Psoas muscle (tissue), 8 donors: ENCODE measurements at regions of chr11 and their contacts with region 1.

Region 1: DNA sequence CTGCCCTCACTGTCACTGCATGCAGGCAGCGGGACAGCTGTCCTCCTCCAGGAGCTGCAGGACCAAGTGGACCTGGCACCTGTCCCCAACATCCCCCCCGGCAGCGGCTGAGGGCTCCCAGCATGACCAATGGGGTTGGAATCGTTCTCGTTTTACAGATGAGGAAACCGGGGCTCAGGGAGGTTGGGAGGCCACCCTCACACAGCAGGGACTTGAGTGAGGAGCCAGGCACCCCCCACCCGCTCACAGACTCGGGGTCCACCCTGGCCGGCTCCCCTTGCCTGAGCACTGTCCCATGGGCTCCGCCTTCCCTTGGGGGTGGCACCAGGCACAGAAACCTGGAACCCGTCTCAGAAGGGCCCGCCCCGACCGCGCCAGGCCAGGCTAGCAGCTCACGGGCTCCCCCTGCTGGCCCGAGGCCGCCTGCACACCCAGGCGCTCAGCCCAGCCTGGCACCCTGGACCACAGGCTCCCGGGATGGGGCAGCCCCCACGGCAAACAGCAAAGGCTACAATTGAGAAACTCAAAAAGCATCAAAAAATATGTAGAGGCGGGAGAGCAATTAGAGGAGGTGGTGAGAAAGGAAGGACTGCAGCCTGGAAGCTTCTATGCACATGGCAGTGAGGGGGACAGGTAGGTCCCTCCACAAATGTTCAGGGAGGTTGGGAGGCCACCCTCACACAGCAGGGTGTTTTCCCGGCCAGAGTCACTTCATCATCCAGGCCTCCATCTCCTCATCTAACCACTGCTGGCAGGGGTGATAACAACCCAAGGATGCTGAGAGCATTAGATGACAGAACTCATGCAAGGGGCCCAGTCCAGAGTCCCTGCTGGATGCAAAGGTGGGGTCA is 12.8 kb downstream of the MACROD1 start:
- DNase-seq: peak; percentile 66 to 81
- ATAC-seq: peak; percentile 50 to 70 (median 64)
- H3K4me3 ChIP-seq: peak overlapping the region; percentile 13
- H3K27ac ChIP-seq: no peak overlapping the region
- H3K4me1 ChIP-seq: peaks cover 76% of the 10 kb centered on the region
- H3K27me3 ChIP-seq: no peaks in the 10 kb centered on the region
- CTCF ChIP-seq: peak; percentile 99

Region 2: GRCh38 chr11:63838678-63839507 is 314.2 kb before region 1 on chr11 and contains the start of gene MARK2:
- intact Hi-C with region 1: loop called (anchors 5 to 10 kb)
- DNase-seq: peak; percentile 98 to 99
- ATAC-seq: peak; percentile 91 to 94 (median 93)
- H3K4me3 ChIP-seq: peak within 1 kb of the TSS; percentile 89
- H3K27ac ChIP-seq: peak within 1 kb of the TSS; percentile 92
- H3K4me1 ChIP-seq: peaks cover 45% of the 10 kb centered on the region
- H3K27me3 ChIP-seq: no peaks in the 10 kb centered on the region
- CTCF ChIP-seq: no peak
- total RNA-seq, gene MARK2: 21.7 to 24.9 (median 22.9) TPM

Region 3: DNA sequence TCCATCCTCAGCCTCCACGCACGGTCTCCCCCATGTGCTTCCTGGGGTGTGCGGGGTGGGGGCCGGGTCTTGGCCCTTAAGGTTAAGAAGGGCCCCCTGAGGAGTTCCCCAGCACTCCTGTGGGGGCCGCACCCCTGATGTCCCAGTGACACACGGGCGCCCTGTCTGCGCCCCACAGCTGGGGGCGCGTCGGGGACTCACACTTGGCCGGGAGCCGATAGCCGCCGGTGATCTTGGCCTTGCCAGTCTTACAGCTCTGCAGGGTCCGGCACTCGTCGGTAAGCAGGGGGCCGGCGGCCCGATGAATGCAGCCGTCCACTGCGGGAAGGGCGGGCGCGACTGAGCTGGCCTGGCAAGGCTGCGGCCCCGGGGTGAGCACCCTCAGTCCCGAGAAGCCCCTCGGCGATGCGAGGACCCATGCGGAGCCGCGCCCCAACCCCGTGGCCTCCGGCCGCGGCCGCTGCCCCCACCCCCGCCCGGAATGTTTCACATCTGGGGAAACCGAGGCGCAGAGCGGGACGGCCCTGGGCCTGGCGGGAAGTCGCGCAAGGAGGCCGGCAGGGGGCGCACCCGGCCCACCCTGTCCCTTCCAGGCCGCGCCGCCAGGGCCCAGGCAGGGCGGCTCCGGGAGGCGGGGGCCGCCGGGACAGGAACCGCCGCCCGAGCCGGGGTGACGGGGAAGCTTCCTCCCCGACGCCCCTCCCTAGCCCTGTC is 152.9 kb before region 1 on chr11:
- intact Hi-C with region 1: loop called (anchors 1 to 2 kb)
- DNase-seq: peak; percentile 82 to 86
- ATAC-seq: peak; percentile 77 to 87 (median 84)
- H3K4me3 ChIP-seq: peak overlapping the region; percentile 53
- H3K27ac ChIP-seq: no peak overlapping the region
- H3K4me1 ChIP-seq: peaks cover 10% of the 10 kb centered on the region
- H3K27me3 ChIP-seq: no peaks in the 10 kb centered on the region
- CTCF ChIP-seq: peak; percentile 75

Region 4: GRCh38 chr11:64100360-64100759 is 52.7 kb before region 1 on chr11:
- intact Hi-C with region 1: loop called in 1 of 2 experiments (anchors 5 kb)
- DNase-seq: no peak
- ATAC-seq: no peak
- H3K4me3 ChIP-seq: no peak overlapping the region
- H3K27ac ChIP-seq: no peak overlapping the region
- H3K4me1 ChIP-seq: peaks cover 61% of the 10 kb centered on the region
- H3K27me3 ChIP-seq: no peaks in the 10 kb centered on the region
- CTCF ChIP-seq: no peak